CD4-positive, alpha-beta T cell (primary cell): ENCODE measurements at regions of chr11 and their contacts with region 1.

Region 1: GRCh38 chr11:2930704-2931428 is 1.6 kb upstream of the PHLDA2 start:
- DNase-seq: peak in 11 of 14 experiments; percentile 24 to 70 (median 45)
- ATAC-seq: no peak
- H3K4me3 ChIP-seq: peak overlapping the region; percentile 55
- H3K4me3 Mint-ChIP-seq: peak overlapping the region; percentile 85
- H3K27ac ChIP-seq: no peak overlapping the region
- H3K27ac Mint-ChIP-seq: no peak overlapping the region
- H3K4me1 ChIP-seq: peaks cover 48% of the 10 kb centered on the region
- H3K4me1 Mint-ChIP-seq: peaks cover 24% of the 10 kb centered on the region
- H3K27me3 ChIP-seq: peaks cover 21 to 24% of the 10 kb centered on the region in 2 experiments
- H3K27me3 Mint-ChIP-seq: peaks cover 30% of the 10 kb centered on the region
- CTCF ChIP-seq: peak; percentile 56

Region 2: DNA sequence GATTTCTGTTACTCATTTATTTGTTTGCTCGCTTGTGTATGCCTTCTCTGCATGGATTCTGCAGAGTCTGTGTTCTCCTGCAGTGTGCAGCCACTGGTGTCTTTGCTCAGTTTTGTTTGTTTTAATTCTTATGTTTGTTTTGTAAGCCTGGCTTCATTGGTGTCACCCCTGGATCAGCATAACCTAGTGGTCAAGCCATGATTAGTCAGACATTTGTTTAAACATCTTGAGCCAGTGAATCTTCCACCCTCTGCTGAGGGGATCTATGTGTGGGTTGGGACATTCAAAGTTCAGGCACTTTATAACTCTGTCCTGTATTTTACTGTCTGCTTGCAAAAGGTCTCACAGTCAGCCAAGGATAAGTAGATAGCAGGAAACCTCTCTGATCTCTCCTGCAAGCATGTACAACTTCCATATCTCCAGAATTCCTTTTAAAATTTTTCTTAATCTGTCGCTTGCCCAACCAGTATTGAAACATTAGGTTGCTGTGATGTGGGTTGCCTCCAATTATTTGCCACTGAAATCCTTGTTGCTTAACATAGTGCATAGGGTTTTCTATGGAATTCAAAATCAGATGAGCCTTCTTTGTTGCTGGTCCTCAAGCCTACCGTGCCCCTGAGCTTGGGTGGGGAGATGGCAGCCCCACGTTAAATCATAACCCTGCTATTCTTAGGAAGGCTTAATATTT is 317.8 kb before region 1 on chr11:
- CTCF ChIA-PET with region 1: no interaction called
- POLR2A ChIA-PET with region 1: no interaction called
- intact Hi-C with region 1: loop called in 1 of 2 experiments (anchors 2 kb)
- DNase-seq: no peak
- ATAC-seq: no peak
- H3K4me3 ChIP-seq: no peak overlapping the region
- H3K4me3 Mint-ChIP-seq: no peak overlapping the region
- H3K27ac ChIP-seq: no peak overlapping the region
- H3K27ac Mint-ChIP-seq: no peak overlapping the region
- H3K4me1 ChIP-seq: no peaks in the 10 kb centered on the region
- H3K4me1 Mint-ChIP-seq: no peaks in the 10 kb centered on the region
- H3K27me3 ChIP-seq: no peaks in the 10 kb centered on the region
- H3K27me3 Mint-ChIP-seq: no peaks in the 10 kb centered on the region
- CTCF ChIP-seq: no peak

Region 3: GRCh38 chr11:2741377-2742131 is 189.3 kb before region 1 on chr11:
- CTCF ChIA-PET with region 1: no interaction called
- POLR2A ChIA-PET with region 1: no interaction called
- intact Hi-C with region 1: no loop called
- DNase-seq: no peak
- ATAC-seq: no peak
- H3K4me3 ChIP-seq: no peak overlapping the region
- H3K4me3 Mint-ChIP-seq: no peak overlapping the region
- H3K27ac ChIP-seq: no peak overlapping the region
- H3K27ac Mint-ChIP-seq: no peak overlapping the region
- H3K4me1 ChIP-seq: no peaks in the 10 kb centered on the region
- H3K4me1 Mint-ChIP-seq: no peaks in the 10 kb centered on the region
- H3K27me3 ChIP-seq: no peaks in the 10 kb centered on the region
- H3K27me3 Mint-ChIP-seq: no peaks in the 10 kb centered on the region
- CTCF ChIP-seq: no peak

Region 4: GRCh38 chr11:2945031-2945756 is 14.3 kb after region 1 on chr11:
- CTCF ChIA-PET with region 1: interaction called, 4 read pairs
- POLR2A ChIA-PET with region 1: interaction called, 11 read pairs
- intact Hi-C with region 1: no loop called
- DNase-seq: peak in 9 of 14 experiments; percentile 34 to 74 (median 51)
- ATAC-seq: peak; percentile 54
- H3K4me3 ChIP-seq: no peak overlapping the region
- H3K4me3 Mint-ChIP-seq: peak overlapping the region; percentile 39
- H3K27ac ChIP-seq: no peak overlapping the region
- H3K27ac Mint-ChIP-seq: peak overlapping the region; percentile 81
- H3K4me1 ChIP-seq: peaks cover 60% of the 10 kb centered on the region
- H3K4me1 Mint-ChIP-seq: peaks cover 63% of the 10 kb centered on the region
- H3K27me3 ChIP-seq: no peaks in the 10 kb centered on the region
- H3K27me3 Mint-ChIP-seq: no peaks in the 10 kb centered on the region
- CTCF ChIP-seq: no peak